ENCODE measurements at regions of chr15 and their contacts with region 1.

Region 1: DNA sequence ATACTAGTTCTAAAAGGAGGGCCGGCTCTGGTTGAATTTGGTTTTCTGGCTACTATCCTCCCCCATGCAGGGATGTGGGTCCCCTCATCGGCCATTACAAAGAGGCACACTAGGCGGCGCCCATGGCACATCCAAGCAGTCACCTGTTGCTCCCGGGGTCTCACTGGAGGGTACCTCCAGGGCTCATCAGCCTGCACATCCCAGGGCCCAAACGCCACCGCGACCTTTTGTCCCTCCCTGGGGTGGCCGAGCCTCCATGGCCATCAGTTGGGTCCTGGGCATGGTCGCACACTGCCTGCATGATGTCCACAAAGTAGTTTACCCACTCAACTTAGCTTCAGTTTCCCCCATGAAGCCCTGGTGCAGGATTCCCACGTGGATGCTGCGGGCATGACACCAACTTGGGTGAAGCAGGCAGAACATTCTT is 28.3 kb downstream of the IDH3A start:
- DNase-seq: peak; percentile 68
- ATAC-seq: peak; percentile 62
- H3K4me3 Mint-ChIP-seq: no peak overlapping the region
- H3K27ac Mint-ChIP-seq: no peak overlapping the region
- H3K4me1 Mint-ChIP-seq: peaks cover 23% of the 10 kb centered on the region
- H3K27me3 Mint-ChIP-seq: no peaks in the 10 kb centered on the region

Region 2: GRCh38 chr15:78131295-78132061 is 46.0 kb before region 1 on chr15 and contains the start of gene CIB2:
- CTCF ChIA-PET with region 1: interaction called, 10 read pairs
- DNase-seq: peak; percentile 82
- ATAC-seq: peak; percentile 93
- H3K4me3 Mint-ChIP-seq: peak within 1 kb of the TSS; percentile 77
- H3K27ac Mint-ChIP-seq: peak within 1 kb of the TSS; percentile 74
- H3K4me1 Mint-ChIP-seq: peaks cover 16% of the 10 kb centered on the region
- H3K27me3 Mint-ChIP-seq: no peaks in the 10 kb centered on the region
- total RNA-seq, gene CIB2: 0.94 to 1.2 TPM

Region 3: DNA sequence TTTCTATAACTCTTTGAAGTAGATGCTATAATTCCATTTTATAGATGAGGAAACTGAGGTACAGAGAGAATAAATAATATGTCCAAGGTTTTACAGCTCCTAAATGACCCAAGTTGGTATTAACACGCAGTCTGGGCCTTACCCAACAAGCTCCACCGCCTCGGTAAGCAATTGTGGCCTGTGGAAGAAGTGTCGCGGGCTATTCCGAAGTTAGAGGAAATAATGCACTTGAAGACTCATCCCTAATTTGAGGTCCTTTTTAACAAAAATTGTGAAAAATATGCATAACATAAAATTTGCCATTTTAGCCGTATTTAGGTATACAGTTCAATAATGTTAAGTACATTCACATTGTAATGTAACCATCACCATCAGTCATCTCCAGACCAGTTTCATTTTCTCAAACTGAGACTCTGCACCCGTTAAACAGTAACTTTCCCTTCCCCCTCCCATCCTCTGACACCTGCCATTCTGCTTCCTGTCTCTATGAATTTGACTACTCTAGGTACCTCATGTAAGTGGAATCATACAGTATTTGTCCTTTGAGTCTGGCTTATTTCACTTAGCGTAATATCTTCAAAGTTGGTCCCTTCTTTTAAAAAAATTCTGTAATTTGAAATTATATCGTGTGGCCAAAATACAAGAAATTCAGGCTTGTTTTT is 10.1 kb before region 1 on chr15:
- CTCF ChIA-PET with region 1: interaction called, 18 read pairs
- DNase-seq: peak; percentile 78
- ATAC-seq: peak; percentile 99
- H3K4me3 Mint-ChIP-seq: peak overlapping the region; percentile 61
- H3K27ac Mint-ChIP-seq: peak overlapping the region; percentile 89
- H3K4me1 Mint-ChIP-seq: peaks cover 37% of the 10 kb centered on the region
- H3K27me3 Mint-ChIP-seq: no peaks in the 10 kb centered on the region